Activated B cell treated with CpG ODN at 0.5 μM for 24 hours (primary cell): ENCODE measurements at regions of chr20 and their contacts with region 1.

Region 1: DNA sequence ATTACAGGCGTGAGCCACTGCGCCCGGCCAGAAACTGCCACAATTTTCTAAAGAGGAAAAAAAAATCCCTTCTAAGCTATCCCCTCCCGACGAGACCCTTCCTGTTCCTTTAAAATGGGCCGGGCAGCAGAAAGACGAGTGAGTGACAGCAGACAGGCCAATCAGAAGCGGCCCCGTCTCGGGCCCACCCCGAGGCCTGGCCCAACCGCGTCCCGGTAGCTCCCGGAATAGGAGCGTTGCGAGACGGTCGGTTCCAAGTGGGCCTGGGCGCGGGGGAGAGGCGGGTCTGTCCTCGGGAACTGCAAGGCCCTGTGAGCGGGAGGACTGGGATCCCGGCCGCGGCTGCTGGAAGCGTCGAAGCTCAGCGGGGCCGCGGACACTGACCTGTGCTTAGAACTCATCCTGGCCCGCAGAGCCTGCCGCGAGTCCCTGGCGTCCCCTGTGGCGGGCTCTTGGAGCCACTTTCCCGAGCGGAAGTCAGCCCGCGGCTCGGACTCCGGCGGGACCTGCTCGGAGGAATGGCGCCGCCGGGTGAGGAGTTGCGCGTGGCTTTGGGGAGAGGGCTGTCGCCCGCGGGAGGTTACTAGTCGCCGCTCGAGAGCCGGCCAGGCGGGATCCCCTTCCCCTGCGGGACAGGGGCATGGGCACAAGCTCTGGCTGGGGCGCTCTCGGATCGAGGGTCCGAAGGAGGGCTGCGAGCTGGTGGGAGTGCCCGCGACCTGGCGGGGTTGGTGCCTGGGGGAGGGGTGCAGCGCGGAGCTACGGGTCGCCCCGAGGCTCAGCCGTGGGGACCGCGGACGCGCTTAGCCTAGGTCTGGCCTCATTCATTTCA is at the starts of genes MROH8 and RPN2:
- DNase-seq: peak; percentile 88
- ATAC-seq: peak; percentile 91
- H3K4me3 Mint-ChIP-seq: peak within 1 kb of the TSS; percentile 98
- H3K27ac Mint-ChIP-seq: peak within 1 kb of the TSS; percentile 99
- H3K4me1 Mint-ChIP-seq: peaks cover 45% of the 10 kb centered on the region
- H3K27me3 Mint-ChIP-seq: no peaks in the 10 kb centered on the region
- CTCF ChIP-seq: no peak
- total RNA-seq, gene MROH8: 3.2 and 5.9 TPM in 2 replicates
- total RNA-seq, gene RPN2: 106 and 109 TPM in 2 replicates

Region 2: DNA sequence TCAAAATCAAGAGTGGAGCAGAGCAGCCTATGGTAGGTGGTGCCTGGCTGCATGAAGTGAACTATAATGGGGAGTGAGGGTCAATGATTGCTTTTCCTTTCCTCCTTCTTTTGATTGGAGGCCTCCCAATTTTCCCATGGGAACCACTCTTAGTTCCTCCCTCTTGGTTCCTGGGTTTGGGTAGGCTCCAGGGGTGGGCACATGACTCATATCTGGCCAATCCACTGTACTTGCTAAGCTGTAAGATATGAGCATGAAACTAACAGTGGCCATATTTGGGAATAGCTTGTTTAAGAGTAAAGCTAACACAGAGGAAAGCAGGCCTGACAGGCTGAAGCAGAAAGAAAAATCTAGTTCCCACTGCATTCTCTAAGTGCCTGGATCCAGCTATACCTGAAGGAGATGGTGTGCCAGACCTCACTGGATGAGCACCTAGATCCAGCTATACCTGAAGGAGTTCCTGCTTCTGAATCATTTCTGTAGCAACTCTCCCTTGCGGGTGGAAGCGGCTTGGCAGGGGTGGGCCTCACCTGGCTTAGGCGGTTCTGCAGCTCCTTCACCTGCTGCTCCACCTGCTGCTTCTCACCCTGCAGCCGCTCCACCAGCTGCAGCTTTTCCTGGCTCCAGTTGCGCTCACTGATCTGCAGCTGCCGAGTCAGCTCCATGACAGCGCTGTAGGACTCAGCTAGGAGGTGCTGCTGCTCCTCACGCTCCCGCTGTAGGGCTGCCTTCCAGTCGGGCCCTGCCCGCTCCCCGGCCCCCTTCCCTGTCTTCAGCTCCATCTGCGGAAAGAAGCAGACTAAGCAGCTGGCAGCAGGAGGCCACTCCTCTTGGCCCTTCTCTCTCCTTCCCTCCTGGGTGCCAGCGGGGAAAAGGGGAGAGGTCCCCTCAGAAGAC is 376.5 kb before region 1 on chr20:
- CTCF ChIA-PET with region 1: no interaction called
- POLR2A ChIA-PET with region 1: no interaction called
- intact Hi-C with region 1: no loop called
- DNase-seq: no peak
- ATAC-seq: no peak
- H3K4me3 Mint-ChIP-seq: no peak overlapping the region
- H3K27ac Mint-ChIP-seq: no peak overlapping the region
- H3K4me1 Mint-ChIP-seq: no peaks in the 10 kb centered on the region
- H3K27me3 Mint-ChIP-seq: no peaks in the 10 kb centered on the region
- CTCF ChIP-seq: no peak

Region 3: DNA sequence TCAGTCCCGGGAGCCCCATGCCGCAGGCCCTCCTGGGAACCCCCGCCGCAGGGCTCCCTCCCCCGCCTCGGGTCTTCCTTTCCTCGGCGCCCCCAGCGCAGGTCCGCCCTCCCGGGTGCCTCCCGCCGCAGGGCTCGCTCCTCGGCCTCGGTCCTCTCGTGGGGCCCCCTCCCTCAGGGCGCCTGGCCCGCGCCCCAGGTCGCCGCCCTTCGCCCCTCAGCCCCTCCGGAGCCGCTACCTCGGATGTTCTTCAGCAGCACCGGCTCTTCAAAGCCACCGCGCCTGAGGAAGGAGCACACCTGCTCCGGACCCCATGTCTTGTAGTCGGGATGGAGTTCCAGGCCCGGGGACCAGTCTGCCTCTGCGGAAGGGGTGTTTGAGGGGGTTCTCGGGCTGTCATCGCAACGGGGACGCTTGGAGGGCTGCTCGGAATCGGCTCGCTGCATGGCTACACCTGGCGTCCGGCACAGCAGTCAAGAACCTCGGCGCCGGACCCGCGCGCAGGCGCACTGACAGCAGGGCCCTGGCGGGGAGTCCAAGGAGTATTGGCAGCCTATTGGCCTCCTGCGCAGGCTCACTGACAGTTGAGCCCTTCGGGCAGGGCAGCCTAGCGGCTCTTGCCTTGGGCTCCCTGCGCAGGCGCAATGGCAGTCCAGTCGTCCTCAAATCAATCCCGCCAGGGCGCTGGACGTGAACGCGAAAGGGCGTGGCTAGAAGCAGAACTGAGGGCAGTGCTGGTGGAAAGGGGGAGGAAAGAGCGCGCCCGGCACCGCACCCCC is 227.7 kb before region 1 on chr20 and contains the start of gene SAMHD1:
- CTCF ChIA-PET with region 1: no interaction called
- POLR2A ChIA-PET with region 1: no interaction called
- intact Hi-C with region 1: loop called (anchors 1 kb)
- DNase-seq: peak; percentile 85
- ATAC-seq: peak; percentile 97
- H3K4me3 Mint-ChIP-seq: peak within 1 kb of the TSS; percentile 96
- H3K27ac Mint-ChIP-seq: peak within 1 kb of the TSS; percentile 81
- H3K4me1 Mint-ChIP-seq: peaks cover 24% of the 10 kb centered on the region
- H3K27me3 Mint-ChIP-seq: no peaks in the 10 kb centered on the region
- CTCF ChIP-seq: no peak
- total RNA-seq, gene SAMHD1: 15.1 and 16.4 TPM in 2 replicates

Region 4: DNA sequence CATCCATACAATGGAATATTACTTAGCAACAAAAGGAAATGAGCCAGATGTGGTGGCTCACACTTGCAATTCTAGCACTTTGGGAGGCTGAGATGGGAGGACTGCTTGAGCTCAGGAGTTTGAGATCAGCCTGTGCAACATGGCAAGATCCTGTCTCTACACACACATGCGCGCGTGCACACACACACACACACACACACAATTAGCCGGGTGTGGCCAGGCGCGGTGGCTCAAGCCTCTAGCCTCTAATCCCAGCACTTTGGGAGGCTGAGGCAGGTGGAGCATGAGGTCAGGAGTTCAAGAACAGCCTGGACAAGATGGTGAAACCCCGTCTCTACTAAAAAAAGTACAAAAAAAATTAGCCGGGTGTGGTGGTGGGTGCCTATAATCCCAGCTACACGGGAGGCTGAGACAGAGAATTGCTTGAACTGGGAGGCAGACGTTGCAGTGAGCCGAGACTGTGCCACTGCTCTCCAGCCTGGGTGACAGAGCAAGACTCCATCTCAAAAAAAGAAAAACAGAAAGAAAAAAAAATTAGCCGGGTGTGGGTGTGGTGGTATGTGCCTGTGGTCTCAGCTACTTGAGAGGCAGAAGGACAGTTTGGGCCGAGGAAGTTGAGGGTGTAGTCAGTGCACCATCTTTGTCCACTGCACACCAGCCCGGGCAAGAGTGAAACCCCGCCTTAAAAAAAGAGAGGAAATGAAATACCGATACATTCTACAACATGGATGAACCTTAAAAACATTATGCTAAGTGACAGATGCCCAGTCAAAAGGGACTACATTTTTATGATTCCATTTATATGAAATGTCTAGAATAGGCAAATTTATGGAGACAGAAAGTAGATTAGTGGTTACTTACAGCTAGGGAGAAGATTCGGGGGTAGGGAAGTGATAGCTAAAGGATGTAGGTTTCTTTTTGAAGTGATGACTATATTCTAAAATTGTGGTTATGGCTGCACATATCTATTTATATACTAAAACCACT is 135.8 kb before region 1 on chr20:
- CTCF ChIA-PET with region 1: no interaction called
- POLR2A ChIA-PET with region 1: interaction called, 31 read pairs
- intact Hi-C with region 1: loop called (anchors 1 kb)
- DNase-seq: peak; percentile 15
- ATAC-seq: peak; percentile 61
- H3K4me3 Mint-ChIP-seq: peak overlapping the region; percentile 80
- H3K27ac Mint-ChIP-seq: peak overlapping the region; percentile 97
- H3K4me1 Mint-ChIP-seq: peaks cover 30% of the 10 kb centered on the region
- H3K27me3 Mint-ChIP-seq: no peaks in the 10 kb centered on the region
- CTCF ChIP-seq: no peak

Region 5: GRCh38 chr20:37192137-37192854 is 13.2 kb after region 1 on chr20:
- CTCF ChIA-PET with region 1: interaction called, 48 read pairs
- POLR2A ChIA-PET with region 1: interaction called, 29 read pairs
- intact Hi-C with region 1: loop called (anchors 2 kb)
- DNase-seq: peak; percentile 46
- ATAC-seq: peak; percentile 84
- H3K4me3 Mint-ChIP-seq: no peak overlapping the region
- H3K27ac Mint-ChIP-seq: no peak overlapping the region
- H3K4me1 Mint-ChIP-seq: peaks cover 57% of the 10 kb centered on the region
- H3K27me3 Mint-ChIP-seq: no peaks in the 10 kb centered on the region
- CTCF ChIP-seq: peak; percentile 54

Region 6: GRCh38 chr20:37288091-37288490 is 109.0 kb after region 1 on chr20:
- CTCF ChIA-PET with region 1: no interaction called
- POLR2A ChIA-PET with region 1: interaction called, 10 read pairs
- intact Hi-C with region 1: loop called (anchors 1 kb)
- DNase-seq: no peak
- ATAC-seq: no peak
- H3K4me3 Mint-ChIP-seq: no peak overlapping the region
- H3K27ac Mint-ChIP-seq: no peak overlapping the region
- H3K4me1 Mint-ChIP-seq: peaks cover 35% of the 10 kb centered on the region
- H3K27me3 Mint-ChIP-seq: no peaks in the 10 kb centered on the region
- CTCF ChIP-seq: no peak

Region 7: GRCh38 chr20:37329481-37330165 is 150.6 kb after region 1 on chr20:
- CTCF ChIA-PET with region 1: no interaction called
- POLR2A ChIA-PET with region 1: no interaction called
- intact Hi-C with region 1: no loop called
- DNase-seq: no peak
- ATAC-seq: no peak
- H3K4me3 Mint-ChIP-seq: no peak overlapping the region
- H3K27ac Mint-ChIP-seq: no peak overlapping the region
- H3K4me1 Mint-ChIP-seq: peaks cover 22% of the 10 kb centered on the region
- H3K27me3 Mint-ChIP-seq: no peaks in the 10 kb centered on the region
- CTCF ChIP-seq: no peak

Region 8: GRCh38 chr20:37527638-37528441 is 348.8 kb after region 1 on chr20 and contains the start of gene BLCAP:
- CTCF ChIA-PET with region 1: no interaction called
- POLR2A ChIA-PET with region 1: interaction called, 6 read pairs
- intact Hi-C with region 1: loop called (anchors 1 kb)
- DNase-seq: peak; percentile 87
- ATAC-seq: peak; percentile 87
- H3K4me3 Mint-ChIP-seq: peak within 1 kb of the TSS; percentile 93
- H3K27ac Mint-ChIP-seq: peak within 1 kb of the TSS; percentile 100
- H3K4me1 Mint-ChIP-seq: peaks cover 54% of the 10 kb centered on the region
- H3K27me3 Mint-ChIP-seq: no peaks in the 10 kb centered on the region
- CTCF ChIP-seq: no peak
- total RNA-seq, gene BLCAP: 70.3 and 78.0 TPM in 2 replicates